ENCODE measurements at regions of chr17 and their contacts with region 1.

Region 1: GRCh38 chr17:59829217-59830006 is 63.3 kb downstream of the TUBD1 start:
- DNase-seq: no peak
- H3K4me3 ChIP-seq: no peak overlapping the region
- H3K27ac ChIP-seq: peak overlapping the region; percentile 71 to 94 (median 78)
- H3K4me1 ChIP-seq: peaks cover 0 to 83% (median 60%) of the 10 kb centered on the region in 4 donors
- H3K27me3 ChIP-seq: no peaks in the 10 kb centered on the region
- CTCF ChIP-seq: no peak
- EP300 ChIP-seq: peak in 1 of 4 donors; percentile 61
- POLR2A ChIP-seq: no peak

Region 2: GRCh38 chr17:59769891-59770290 is 59.5 kb before region 1 on chr17:
- intact Hi-C with region 1: no loop called
- DNase-seq: no peak
- H3K4me3 ChIP-seq: no peak overlapping the region
- H3K27ac ChIP-seq: peak overlapping the region in 2 of 4 donors; percentile 20 to 52
- H3K4me1 ChIP-seq: peaks cover 0 to 10% (median 0%) of the 10 kb centered on the region in 4 donors
- H3K27me3 ChIP-seq: no peaks in the 10 kb centered on the region
- CTCF ChIP-seq: no peak
- EP300 ChIP-seq: no peak
- POLR2A ChIP-seq: no peak

Region 3: GRCh38 chr17:59786536-59787319 is 42.7 kb before region 1 on chr17:
- intact Hi-C with region 1: loop called (anchors 5 kb)
- DNase-seq: peak; percentile 77
- H3K4me3 ChIP-seq: peak overlapping the region; percentile 1 to 32 (median 19)
- H3K27ac ChIP-seq: peak overlapping the region; percentile 78 to 93 (median 82)
- H3K4me1 ChIP-seq: peaks cover 0 to 71% (median 50%) of the 10 kb centered on the region in 4 donors
- H3K27me3 ChIP-seq: no peaks in the 10 kb centered on the region
- CTCF ChIP-seq: peak in 1 of 4 experiments; percentile 6
- EP300 ChIP-seq: peak in 3 of 4 donors; percentile 70 to 98 (median 92)
- POLR2A ChIP-seq: no peak

Region 4: GRCh38 chr17:59901604-59902003 is 72.2 kb after region 1 on chr17:
- intact Hi-C with region 1: no loop called
- DNase-seq: no peak
- H3K4me3 ChIP-seq: no peak overlapping the region
- H3K27ac ChIP-seq: no peak overlapping the region
- H3K4me1 ChIP-seq: peaks cover 0 to 9% (median 2%) of the 10 kb centered on the region in 4 donors
- H3K27me3 ChIP-seq: no peaks in the 10 kb centered on the region
- CTCF ChIP-seq: no peak
- EP300 ChIP-seq: no peak
- POLR2A ChIP-seq: no peak